PC-9 (cell line): ENCODE measurements at regions of chr9 and their contacts with region 1.

Region 1: DNA sequence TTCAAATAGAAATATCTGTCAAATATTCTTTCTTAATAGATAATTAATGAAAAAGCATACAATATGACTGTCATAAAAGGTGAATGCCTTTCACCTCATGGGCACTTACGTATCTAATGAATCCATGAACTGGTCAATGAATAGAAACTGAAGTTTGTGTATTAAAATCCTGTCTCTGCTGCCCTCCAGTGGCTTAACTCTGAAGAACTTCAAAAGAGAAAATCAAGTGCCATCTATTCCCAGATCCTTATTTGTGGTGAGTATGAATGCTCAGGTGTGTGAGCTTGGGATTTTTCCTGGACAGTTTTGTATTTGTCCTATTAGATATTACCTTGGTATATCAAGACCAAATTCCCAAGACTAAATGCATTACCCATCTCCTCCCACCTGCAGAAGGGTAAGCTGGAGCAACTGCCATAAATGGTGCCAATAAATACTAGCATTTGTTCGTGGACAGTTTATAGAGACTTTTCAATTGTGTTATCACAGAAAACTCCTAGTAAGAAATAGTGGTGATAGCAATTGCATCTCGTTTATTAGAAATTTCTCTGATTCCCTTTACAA is 44.0 kb upstream of the SVEP1 start:
- DNase-seq: peak; percentile 48 to 58
- H3K4me3 ChIP-seq: no peak overlapping the region
- H3K27ac ChIP-seq: no peak overlapping the region
- H3K4me1 ChIP-seq: no peaks in the 10 kb centered on the region
- H3K27me3 ChIP-seq: no peaks in the 10 kb centered on the region
- CTCF ChIP-seq: peak; percentile 87

Region 2: GRCh38 chr9:109771084-109771483 is 852.5 kb before region 1 on chr9:
- CTCF ChIA-PET with region 1: no interaction called
- POLR2A ChIA-PET with region 1: no interaction called
- intact Hi-C with region 1: no loop called
- DNase-seq: peak in 1 of 2 experiments; percentile 46
- H3K4me3 ChIP-seq: no peak overlapping the region
- H3K27ac ChIP-seq: no peak overlapping the region
- H3K4me1 ChIP-seq: peaks cover 26% of the 10 kb centered on the region
- H3K27me3 ChIP-seq: no peaks in the 10 kb centered on the region
- CTCF ChIP-seq: no peak

Region 3: GRCh38 chr9:109903515-109904138 is 719.9 kb before region 1 on chr9:
- CTCF ChIA-PET with region 1: no interaction called
- POLR2A ChIA-PET with region 1: no interaction called
- intact Hi-C with region 1: loop called (anchors 1 kb)
- DNase-seq: peak; percentile 68 to 70
- H3K4me3 ChIP-seq: no peak overlapping the region
- H3K27ac ChIP-seq: no peak overlapping the region
- H3K4me1 ChIP-seq: 0 out of 2 replicates have a peak, but pooled peaks cover 3% of the 10 kb centered on the region
- H3K27me3 ChIP-seq: no peaks in the 10 kb centered on the region
- CTCF ChIP-seq: peak; percentile 91

Region 4: GRCh38 chr9:110217656-110218099 is 405.9 kb before region 1 on chr9:
- CTCF ChIA-PET with region 1: no interaction called
- POLR2A ChIA-PET with region 1: no interaction called
- intact Hi-C with region 1: loop called (anchors 1 kb)
- DNase-seq: peak in 1 of 2 experiments; percentile 10
- H3K4me3 ChIP-seq: peak overlapping the region; percentile 33; the same call in 1 of the 2 replicates
- H3K27ac ChIP-seq: no peak overlapping the region
- H3K4me1 ChIP-seq: no peaks in the 10 kb centered on the region
- H3K27me3 ChIP-seq: no peaks in the 10 kb centered on the region
- CTCF ChIP-seq: peak; percentile 89

Region 5: DNA sequence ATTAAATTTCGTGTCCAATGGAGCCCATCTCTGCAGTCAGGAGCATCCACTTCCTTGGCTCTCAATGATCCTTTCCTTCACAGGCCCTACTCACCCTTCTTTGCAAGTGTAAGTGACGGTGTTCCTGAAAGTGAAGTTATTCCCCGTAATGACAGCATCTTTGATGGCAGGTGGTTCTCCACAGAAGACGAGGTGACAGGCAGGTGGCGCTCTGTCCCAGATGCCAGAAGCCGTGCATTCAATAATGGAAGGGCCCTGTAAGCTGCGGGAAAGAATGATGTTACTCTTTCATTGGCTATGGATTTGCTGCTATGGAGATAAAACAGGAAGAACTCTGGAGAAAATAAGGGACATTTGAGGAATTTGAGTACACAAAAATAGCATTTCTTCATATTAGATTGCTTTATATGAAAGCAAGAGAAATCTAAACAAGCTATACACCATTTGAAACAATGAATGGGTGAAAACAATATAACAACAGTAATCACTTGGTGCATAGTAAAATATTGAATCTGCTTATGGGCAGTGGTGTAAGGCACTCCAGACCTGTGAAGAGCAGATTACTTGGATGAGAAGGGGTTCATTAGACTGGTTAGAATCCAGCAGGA is 195.9 kb before region 1 on chr9:
- CTCF ChIA-PET with region 1: interaction called, 10 read pairs
- POLR2A ChIA-PET with region 1: no interaction called
- intact Hi-C with region 1: loop called (anchors 1 kb)
- DNase-seq: peak in 1 of 2 experiments; percentile 43
- H3K4me3 ChIP-seq: no peak overlapping the region
- H3K27ac ChIP-seq: no peak overlapping the region
- H3K4me1 ChIP-seq: no peaks in the 10 kb centered on the region
- H3K27me3 ChIP-seq: no peaks in the 10 kb centered on the region
- CTCF ChIP-seq: peak; percentile 56

Region 6: GRCh38 chr9:110543631-110544051 is 79.9 kb before region 1 on chr9:
- CTCF ChIA-PET with region 1: interaction called, 3 read pairs
- POLR2A ChIA-PET with region 1: no interaction called
- intact Hi-C with region 1: loop called (anchors 5 kb)
- DNase-seq: no peak
- H3K4me3 ChIP-seq: no peak overlapping the region
- H3K27ac ChIP-seq: no peak overlapping the region
- H3K4me1 ChIP-seq: peaks cover 18% of the 10 kb centered on the region
- H3K27me3 ChIP-seq: no peaks in the 10 kb centered on the region
- CTCF ChIP-seq: no peak